ENCODE measurements at regions of chr3 and their contacts with region 1.

Region 1: GRCh38 chr3:113606539-113607218 is 74.3 kb downstream of the SIDT1 start:
- DNase-seq: peak; percentile 89
- H3K4me3 ChIP-seq: no peak overlapping the region
- H3K27ac ChIP-seq: peak overlapping the region; percentile 45
- H3K4me1 ChIP-seq: peaks cover 22% of the 10 kb centered on the region
- CTCF ChIP-seq: no peak

Region 2: GRCh38 chr3:113546414-113546893 is 60.2 kb before region 1 on chr3:
- CTCF ChIA-PET with region 1: no interaction called
- POLR2A ChIA-PET with region 1: no interaction called
- intact Hi-C with region 1: no loop called
- DNase-seq: no peak
- H3K4me3 ChIP-seq: no peak overlapping the region
- H3K27ac ChIP-seq: no peak overlapping the region
- H3K4me1 ChIP-seq: peaks cover 10% of the 10 kb centered on the region
- CTCF ChIP-seq: no peak

Region 3: DNA sequence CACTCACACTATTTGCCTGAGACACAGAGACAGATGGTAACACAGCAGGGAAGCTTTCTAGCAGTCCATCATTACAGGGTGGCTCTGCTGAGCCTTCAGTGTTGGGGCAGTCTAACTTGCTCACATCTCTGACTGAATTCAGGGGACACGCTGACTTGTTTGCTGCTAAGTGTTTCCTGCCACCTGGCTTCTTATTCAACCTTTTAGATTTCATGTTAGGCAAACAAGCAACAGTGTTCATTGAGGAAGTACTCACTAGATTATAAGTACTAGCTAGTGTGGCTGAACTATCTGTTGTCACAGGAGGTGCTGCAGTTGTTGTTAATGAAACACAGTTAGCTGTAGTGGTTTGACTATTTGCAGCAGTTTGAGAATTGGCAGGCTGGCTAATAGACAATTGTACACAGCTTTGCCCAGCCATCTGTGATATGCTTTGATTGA is 52.4 kb after region 1 on chr3:
- CTCF ChIA-PET with region 1: no interaction called
- POLR2A ChIA-PET with region 1: interaction called, 3 read pairs
- intact Hi-C with region 1: loop called (anchors 2 kb)
- DNase-seq: peak; percentile 91
- H3K4me3 ChIP-seq: peak overlapping the region; percentile 48
- H3K27ac ChIP-seq: peak overlapping the region; percentile 88
- H3K4me1 ChIP-seq: peaks cover 39% of the 10 kb centered on the region
- CTCF ChIP-seq: no peak